Common myeloid progenitor, CD34-positive (primary cell): ENCODE measurements at regions of chr16 and their contacts with region 1.

Region 1: GRCh38 chr16:16101561-16101960 is 121.7 kb downstream of the ABCC6 start:
- DNase-seq: no peak
- H3K4me3 ChIP-seq: no peak overlapping the region
- H3K27ac ChIP-seq: peak overlapping the region in 1 of 2 experiments; percentile 11
- H3K4me1 ChIP-seq: peaks cover 0 to 43% (median 25%) of the 10 kb centered on the region in 4 experiments
- H3K27me3 ChIP-seq: no peaks in the 10 kb centered on the region

Region 2: GRCh38 chr16:16051132-16051531 is 50.4 kb before region 1 on chr16:
- CTCF ChIA-PET with region 1: interaction called, 5 read pairs
- POLR2A ChIA-PET with region 1: interaction called, 11 read pairs
- DNase-seq: no peak
- H3K4me3 ChIP-seq: no peak overlapping the region
- H3K27ac ChIP-seq: no peak overlapping the region
- H3K4me1 ChIP-seq: no peaks in the 10 kb centered on the region
- H3K27me3 ChIP-seq: no peaks in the 10 kb centered on the region